ENCODE measurements at regions of chr3 and their contacts with region 1.

Region 1: GRCh38 chr3:160343132-160343531 is 55.9 kb downstream of the IFT80 start:
- DNase-seq: no peak
- ATAC-seq: no peak
- H3K4me3 ChIP-seq: no peak overlapping the region
- H3K27ac ChIP-seq: no peak overlapping the region
- H3K4me1 ChIP-seq: no peaks in the 10 kb centered on the region
- H3K27me3 ChIP-seq: no peaks in the 10 kb centered on the region
- CTCF ChIP-seq: peak; percentile 37

Region 2: DNA sequence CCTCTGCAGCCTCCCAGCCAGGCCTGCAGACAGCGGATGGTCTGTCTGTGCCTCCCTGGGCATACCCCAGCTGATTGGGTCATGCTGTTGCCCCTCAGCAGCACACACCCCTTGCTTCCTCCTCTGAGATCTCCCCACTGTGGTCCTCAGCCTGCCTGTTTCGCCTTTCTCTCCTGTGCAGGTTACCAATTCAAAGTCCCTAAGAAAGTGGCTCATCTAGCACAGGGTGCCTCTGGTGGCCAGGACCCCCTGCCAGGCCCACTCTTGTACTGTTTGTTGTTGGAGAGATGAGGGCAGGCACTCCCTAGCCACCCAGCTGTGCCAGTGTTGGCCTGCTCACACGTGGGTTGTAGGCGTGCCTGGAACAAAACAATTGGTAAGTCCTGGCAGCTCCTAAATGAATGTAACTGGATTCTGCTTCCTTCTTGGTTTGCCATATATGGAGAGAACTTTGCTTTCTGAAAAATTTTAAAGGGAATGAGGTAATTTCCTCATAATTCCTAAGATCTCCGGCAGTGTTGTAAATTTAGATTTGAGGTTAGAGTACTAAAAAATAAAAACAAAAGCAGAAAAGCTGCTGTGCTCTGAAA is 567.7 kb before region 1 on chr3:
- intact Hi-C with region 1: no loop called
- DNase-seq: no peak
- ATAC-seq: peak in 3 of 4 donors; percentile 37 to 55 (median 49)
- H3K4me3 ChIP-seq: no peak overlapping the region
- H3K27ac ChIP-seq: peak overlapping the region; percentile 69
- H3K4me1 ChIP-seq: no peaks in the 10 kb centered on the region
- H3K27me3 ChIP-seq: no peaks in the 10 kb centered on the region
- CTCF ChIP-seq: no peak

Region 3: GRCh38 chr3:160027541-160028195 is 315.5 kb before region 1 on chr3:
- intact Hi-C with region 1: loop called (anchors 5 kb)
- DNase-seq: no peak
- ATAC-seq: peak in 1 of 4 donors; percentile 39
- H3K4me3 ChIP-seq: no peak overlapping the region
- H3K27ac ChIP-seq: no peak overlapping the region
- H3K4me1 ChIP-seq: no peaks in the 10 kb centered on the region
- H3K27me3 ChIP-seq: no peaks in the 10 kb centered on the region
- CTCF ChIP-seq: no peak

Region 4: GRCh38 chr3:160099834-160100233 is 243.3 kb before region 1 on chr3:
- intact Hi-C with region 1: no loop called
- DNase-seq: no peak
- ATAC-seq: no peak
- H3K4me3 ChIP-seq: no peak overlapping the region
- H3K27ac ChIP-seq: no peak overlapping the region
- H3K4me1 ChIP-seq: no peaks in the 10 kb centered on the region
- H3K27me3 ChIP-seq: no peaks in the 10 kb centered on the region
- CTCF ChIP-seq: no peak

Region 5: GRCh38 chr3:160150525-160150924 is 192.6 kb before region 1 on chr3:
- intact Hi-C with region 1: loop called in 1 of 2 experiments (anchors 1 kb)
- DNase-seq: no peak
- ATAC-seq: no peak
- H3K4me3 ChIP-seq: no peak overlapping the region
- H3K27ac ChIP-seq: no peak overlapping the region
- H3K4me1 ChIP-seq: no peaks in the 10 kb centered on the region
- H3K27me3 ChIP-seq: no peaks in the 10 kb centered on the region
- CTCF ChIP-seq: no peak

Region 6: GRCh38 chr3:160163229-160163878 is 179.8 kb before region 1 on chr3:
- intact Hi-C with region 1: loop called (anchors 5 to 10 kb)
- DNase-seq: no peak
- ATAC-seq: no peak
- H3K4me3 ChIP-seq: no peak overlapping the region
- H3K27ac ChIP-seq: no peak overlapping the region
- H3K4me1 ChIP-seq: no peaks in the 10 kb centered on the region
- H3K27me3 ChIP-seq: no peaks in the 10 kb centered on the region
- CTCF ChIP-seq: peak; percentile 40

Region 7: DNA sequence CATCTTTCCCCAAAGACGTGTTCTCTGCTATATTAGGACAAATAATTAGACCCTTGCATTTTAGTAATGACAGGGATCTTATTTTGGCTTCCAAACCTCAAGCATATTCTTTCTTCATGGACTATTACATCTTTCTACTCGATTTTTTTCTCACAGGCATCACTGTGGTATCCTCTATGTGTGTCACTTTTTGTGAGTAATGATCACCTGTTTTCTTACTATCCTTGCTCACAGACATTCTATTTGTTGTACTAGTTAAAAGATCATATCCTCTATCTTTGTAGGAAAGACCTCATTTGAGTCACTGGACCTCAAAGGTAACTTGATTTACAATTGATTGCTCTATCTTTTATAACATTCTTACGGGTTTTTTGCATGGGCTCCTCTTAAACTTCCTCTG is 111.1 kb before region 1 on chr3:
- intact Hi-C with region 1: no loop called
- DNase-seq: no peak
- ATAC-seq: no peak
- H3K4me3 ChIP-seq: no peak overlapping the region
- H3K27ac ChIP-seq: no peak overlapping the region
- H3K4me1 ChIP-seq: no peaks in the 10 kb centered on the region
- H3K27me3 ChIP-seq: peaks cover 0 to 43% (median 0%) of the 10 kb centered on the region in 3 donors
- CTCF ChIP-seq: no peak

Region 8: GRCh38 chr3:160449636-160450598 is 106.8 kb after region 1 on chr3 and contains the start of gene TRIM59:
- intact Hi-C with region 1: no loop called
- DNase-seq: peak; percentile 78 to 81
- ATAC-seq: peak; percentile 51 to 80 (median 72)
- H3K4me3 ChIP-seq: peak within 1 kb of the TSS; percentile 58
- H3K27ac ChIP-seq: no peak within 1 kb of the TSS
- H3K4me1 ChIP-seq: peaks cover 9% of the 10 kb centered on the region
- H3K27me3 ChIP-seq: peaks cover 0 to 31% (median 13%) of the 10 kb centered on the region in 3 donors
- CTCF ChIP-seq: no peak
- total RNA-seq, gene TRIM59: 0.20 to 0.81 (median 0.31) TPM

Measured in psoas muscle (tissue), 8 donors.